Activated B cell treated with CpG ODN at 0.5 μM for 24 hours (primary cell): ENCODE measurements at regions of chr21 and their contacts with region 1.

Region 1: GRCh38 chr21:31781737-31782136 is 49.8 kb upstream of the SCAF4 start:
- DNase-seq: no peak
- ATAC-seq: no peak
- H3K4me3 Mint-ChIP-seq: no peak overlapping the region
- H3K27ac Mint-ChIP-seq: no peak overlapping the region
- H3K4me1 Mint-ChIP-seq: peaks cover 29% of the 10 kb centered on the region
- H3K27me3 Mint-ChIP-seq: no peaks in the 10 kb centered on the region
- CTCF ChIP-seq: no peak

Region 2: GRCh38 chr21:31803039-31804007 is 21.6 kb after region 1 on chr21:
- CTCF ChIA-PET with region 1: no interaction called
- POLR2A ChIA-PET with region 1: no interaction called
- intact Hi-C with region 1: no loop called
- DNase-seq: no peak
- ATAC-seq: no peak
- H3K4me3 Mint-ChIP-seq: no peak overlapping the region
- H3K27ac Mint-ChIP-seq: no peak overlapping the region
- H3K4me1 Mint-ChIP-seq: peaks cover 6% of the 10 kb centered on the region
- H3K27me3 Mint-ChIP-seq: peaks cover 18% of the 10 kb centered on the region
- CTCF ChIP-seq: no peak

Region 3: GRCh38 chr21:31873696-31874599 is 92.2 kb after region 1 on chr21:
- CTCF ChIA-PET with region 1: interaction called, 5 read pairs
- POLR2A ChIA-PET with region 1: no interaction called
- intact Hi-C with region 1: loop called (anchors 2 kb)
- DNase-seq: peak; percentile 53
- ATAC-seq: peak; percentile 63
- H3K4me3 Mint-ChIP-seq: peak overlapping the region; percentile 66
- H3K27ac Mint-ChIP-seq: no peak overlapping the region
- H3K4me1 Mint-ChIP-seq: peaks cover 8% of the 10 kb centered on the region
- H3K27me3 Mint-ChIP-seq: peaks cover 47% of the 10 kb centered on the region
- CTCF ChIP-seq: no peak

Region 4: DNA sequence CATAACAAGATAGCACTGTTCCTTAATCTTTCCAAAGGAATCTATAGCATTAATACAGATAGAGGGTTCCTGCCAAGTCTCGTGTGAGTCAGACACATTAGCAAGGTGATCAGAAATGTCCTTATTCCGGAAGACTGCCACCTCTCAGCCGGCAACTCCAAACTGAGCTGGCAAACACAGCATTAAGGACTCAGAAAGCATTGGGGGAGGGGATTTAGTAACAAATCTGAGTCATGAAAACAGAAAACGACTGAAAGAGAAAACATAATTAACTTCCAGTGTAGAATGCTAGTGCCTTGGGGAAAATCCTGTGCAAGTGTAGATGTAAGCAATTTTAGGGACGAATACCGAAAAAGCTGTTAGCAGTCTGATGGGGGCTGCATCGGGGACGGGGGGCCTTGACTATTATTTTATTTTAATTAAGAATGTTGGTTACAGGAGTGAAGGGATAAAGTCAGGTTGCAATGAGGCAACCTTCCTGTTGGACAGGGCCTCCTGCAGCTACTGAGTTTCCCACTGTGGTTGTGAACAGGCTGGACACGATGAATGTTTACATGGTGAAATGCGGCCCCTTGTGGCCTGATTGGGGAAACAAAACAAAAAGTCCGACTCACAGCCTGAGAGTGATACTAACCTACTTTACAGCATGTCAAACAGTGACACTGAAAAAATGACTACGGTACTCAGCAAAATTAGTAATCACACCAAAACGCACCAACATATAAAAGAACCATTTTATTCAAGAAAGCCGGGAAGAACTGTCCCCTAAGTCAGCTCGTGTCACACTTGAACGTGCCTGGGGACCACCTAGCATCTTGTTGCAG is 476.4 kb after region 1 on chr21:
- CTCF ChIA-PET with region 1: interaction called, 8 read pairs
- POLR2A ChIA-PET with region 1: no interaction called
- intact Hi-C with region 1: loop called (anchors 1 kb)
- DNase-seq: no peak
- ATAC-seq: no peak
- H3K4me3 Mint-ChIP-seq: no peak overlapping the region
- H3K27ac Mint-ChIP-seq: no peak overlapping the region
- H3K4me1 Mint-ChIP-seq: no peaks in the 10 kb centered on the region
- H3K27me3 Mint-ChIP-seq: peaks cover 12% of the 10 kb centered on the region
- CTCF ChIP-seq: no peak

Region 5: GRCh38 chr21:32597205-32597604 is 815.5 kb after region 1 on chr21:
- CTCF ChIA-PET with region 1: interaction called, 8 read pairs
- POLR2A ChIA-PET with region 1: no interaction called
- intact Hi-C with region 1: loop called (anchors 1 kb)
- DNase-seq: no peak
- ATAC-seq: no peak
- H3K4me3 Mint-ChIP-seq: no peak overlapping the region
- H3K27ac Mint-ChIP-seq: no peak overlapping the region
- H3K4me1 Mint-ChIP-seq: peaks cover 7% of the 10 kb centered on the region
- H3K27me3 Mint-ChIP-seq: no peaks in the 10 kb centered on the region
- CTCF ChIP-seq: no peak